ENCODE measurements at regions of chr10 and their contacts with region 1.

Region 1: GRCh38 chr10:16777473-16778370 is 39.5 kb downstream of the RSU1 start:
- DNase-seq: no peak
- H3K4me3 ChIP-seq: no peak overlapping the region
- H3K27ac ChIP-seq: no peak overlapping the region
- H3K4me1 ChIP-seq: no peaks in the 10 kb centered on the region
- H3K27me3 ChIP-seq: no peaks in the 10 kb centered on the region
- CTCF ChIP-seq: peak; percentile 60 to 83 (median 69)
- POLR2A ChIP-seq: no peak

Region 2: GRCh38 chr10:15868016-15868415 is 909.7 kb before region 1 on chr10:
- intact Hi-C with region 1: no loop called
- DNase-seq: no peak
- H3K4me3 ChIP-seq: no peak overlapping the region
- H3K27ac ChIP-seq: no peak overlapping the region
- H3K4me1 ChIP-seq: no peaks in the 10 kb centered on the region
- H3K27me3 ChIP-seq: no peaks in the 10 kb centered on the region
- CTCF ChIP-seq: no peak
- POLR2A ChIP-seq: no peak

Region 3: GRCh38 chr10:15898046-15898445 is 879.7 kb before region 1 on chr10:
- intact Hi-C with region 1: loop called (anchors 10 kb)
- DNase-seq: no peak
- H3K4me3 ChIP-seq: no peak overlapping the region
- H3K27ac ChIP-seq: no peak overlapping the region
- H3K4me1 ChIP-seq: no peaks in the 10 kb centered on the region
- H3K27me3 ChIP-seq: no peaks in the 10 kb centered on the region
- CTCF ChIP-seq: peak in 2 of 4 experiments; percentile 17
- POLR2A ChIP-seq: no peak

Region 4: DNA sequence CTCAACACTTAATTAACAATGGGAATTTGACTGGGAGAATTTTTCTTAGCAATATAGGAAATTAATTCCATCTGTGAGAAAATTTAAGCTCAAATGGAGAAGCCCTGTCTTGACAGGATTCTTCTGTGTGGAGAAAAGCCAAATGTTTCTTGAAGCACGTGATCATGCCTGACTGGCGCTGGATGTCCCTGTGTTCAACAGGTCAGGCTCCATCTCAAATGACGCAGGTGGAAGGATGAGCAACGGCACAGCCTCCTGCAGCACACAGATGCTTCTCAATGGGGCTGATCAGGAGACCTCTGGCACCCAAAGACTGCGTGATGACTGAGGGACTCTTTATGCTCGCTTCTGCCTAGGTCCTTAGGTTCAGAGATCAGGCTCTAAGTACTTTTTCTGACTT is 104.3 kb before region 1 on chr10:
- intact Hi-C with region 1: no loop called
- DNase-seq: no peak
- H3K4me3 ChIP-seq: no peak overlapping the region
- H3K27ac ChIP-seq: no peak overlapping the region
- H3K4me1 ChIP-seq: no peaks in the 10 kb centered on the region
- H3K27me3 ChIP-seq: no peaks in the 10 kb centered on the region
- CTCF ChIP-seq: no peak
- POLR2A ChIP-seq: no peak

Region 5: GRCh38 chr10:16915300-16915699 is 137.6 kb after region 1 on chr10:
- intact Hi-C with region 1: no loop called
- DNase-seq: no peak
- H3K4me3 ChIP-seq: no peak overlapping the region
- H3K27ac ChIP-seq: no peak overlapping the region
- H3K4me1 ChIP-seq: no peaks in the 10 kb centered on the region
- H3K27me3 ChIP-seq: no peaks in the 10 kb centered on the region
- CTCF ChIP-seq: no peak
- POLR2A ChIP-seq: no peak